Mammary epithelial cell (primary cell): ENCODE measurements at regions of chr14 and their contacts with region 1.

Region 1: DNA sequence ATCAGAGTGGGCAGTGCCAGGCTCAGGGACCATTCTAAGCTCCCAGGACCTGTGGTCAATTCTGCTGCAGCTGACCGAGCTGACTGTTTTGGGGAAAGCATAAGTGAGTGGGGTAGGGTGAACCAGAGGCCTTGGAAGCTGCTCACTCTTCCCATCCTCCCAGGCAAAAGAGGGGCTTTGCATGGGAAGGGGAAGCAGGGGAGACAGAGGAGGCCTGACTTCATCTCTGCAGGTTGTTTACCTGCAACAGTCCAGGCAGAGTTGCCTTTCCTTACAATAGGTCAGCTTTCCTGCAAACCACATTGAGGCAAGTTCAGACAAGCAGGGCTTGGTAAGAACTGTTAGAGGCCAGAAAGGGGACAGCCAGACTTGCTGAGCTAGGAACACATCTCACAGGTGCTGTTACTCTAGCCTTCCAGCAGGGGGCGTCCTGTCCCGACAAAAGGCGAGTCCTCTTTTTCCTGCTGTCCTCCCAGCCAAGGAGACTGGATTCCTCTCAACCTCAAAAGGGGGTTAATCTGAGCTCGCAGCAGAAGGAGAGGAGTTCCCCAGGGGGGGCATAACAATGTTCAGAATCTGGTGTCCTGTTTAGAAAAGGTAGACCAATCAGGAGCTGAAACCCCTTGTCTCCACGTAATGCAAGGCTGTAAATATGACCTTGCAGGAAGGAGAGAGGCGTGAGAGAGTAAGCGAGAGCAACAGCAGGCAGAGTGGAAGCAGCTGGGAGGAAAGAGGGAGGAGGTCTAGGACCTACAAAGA is 4.3 kb upstream of the DHRS2 start:
- DNase-seq: peak; percentile 89
- H3K4me3 ChIP-seq: no peak overlapping the region
- H3K27ac ChIP-seq: no peak overlapping the region
- H3K4me1 ChIP-seq: peaks cover 8% of the 10 kb centered on the region
- H3K27me3 ChIP-seq: no peaks in the 10 kb centered on the region
- CTCF ChIP-seq: peak; percentile 96

Region 2: GRCh38 chr14:23588884-23589598 is 42.8 kb before region 1 on chr14:
- CTCF ChIA-PET with region 1: interaction called, 10 read pairs
- dilution Hi-C with region 1: no loop called
- in situ Hi-C with region 1: no loop called
- intact Hi-C with region 1: no loop called
- DNase-seq: peak; percentile 72
- H3K4me3 ChIP-seq: no peak overlapping the region
- H3K27ac ChIP-seq: no peak overlapping the region
- H3K4me1 ChIP-seq: no peaks in the 10 kb centered on the region
- H3K27me3 ChIP-seq: no peaks in the 10 kb centered on the region
- CTCF ChIP-seq: peak; percentile 68 to 88

Region 3: GRCh38 chr14:23641915-23642588 is 10.2 kb after region 1 on chr14:
- CTCF ChIA-PET with region 1: no interaction called
- dilution Hi-C with region 1: no loop called
- in situ Hi-C with region 1: no loop called
- intact Hi-C with region 1: no loop called
- DNase-seq: no peak
- H3K4me3 ChIP-seq: no peak overlapping the region
- H3K27ac ChIP-seq: no peak overlapping the region
- H3K4me1 ChIP-seq: no peaks in the 10 kb centered on the region
- H3K27me3 ChIP-seq: no peaks in the 10 kb centered on the region
- CTCF ChIP-seq: no peak

Region 4: DNA sequence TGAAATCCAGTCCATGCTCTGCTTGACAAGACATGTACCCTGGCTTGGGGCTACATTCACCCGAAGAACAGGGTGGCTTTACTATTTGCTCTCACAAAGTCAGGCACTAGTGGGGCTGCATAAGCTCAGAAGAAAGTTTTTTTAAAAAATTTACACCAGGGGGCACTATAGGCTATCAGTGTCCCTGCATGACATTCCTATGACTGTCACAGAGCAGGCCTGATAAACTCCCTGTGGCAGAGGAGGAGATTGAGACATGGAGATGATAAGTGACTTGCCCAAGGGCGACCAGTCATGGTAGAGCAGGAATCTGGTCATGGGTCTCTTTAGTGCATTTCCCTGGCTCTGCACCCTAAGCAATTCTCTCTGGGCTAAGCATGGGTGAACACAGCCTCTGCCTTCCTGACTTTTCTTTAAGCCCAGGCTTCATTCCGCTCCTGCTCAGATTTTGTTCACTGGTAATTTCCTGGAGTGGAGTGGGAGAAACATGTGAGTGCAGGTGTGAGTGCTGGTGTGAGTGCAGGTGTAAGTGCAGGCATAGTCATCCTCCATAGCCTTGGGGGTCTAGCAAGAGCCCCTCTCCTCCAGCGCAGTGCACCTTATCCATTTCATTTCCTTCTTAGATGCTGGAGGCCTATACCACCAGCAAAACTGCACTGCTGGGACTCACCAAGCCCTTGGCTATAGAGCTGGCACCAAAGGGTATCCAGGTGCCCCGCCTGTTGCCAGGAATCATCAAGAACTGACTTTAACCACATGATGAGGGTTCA is 95.9 kb after region 1 on chr14:
- CTCF ChIA-PET with region 1: no interaction called
- dilution Hi-C with region 1: no loop called
- in situ Hi-C with region 1: no loop called
- intact Hi-C with region 1: loop called (anchors 1 kb)
- DNase-seq: peak; percentile 43
- H3K4me3 ChIP-seq: no peak overlapping the region
- H3K27ac ChIP-seq: no peak overlapping the region
- H3K4me1 ChIP-seq: peaks cover 8% of the 10 kb centered on the region
- H3K27me3 ChIP-seq: peaks cover 2% of the 10 kb centered on the region
- CTCF ChIP-seq: peak; percentile 37 to 40

Region 5: DNA sequence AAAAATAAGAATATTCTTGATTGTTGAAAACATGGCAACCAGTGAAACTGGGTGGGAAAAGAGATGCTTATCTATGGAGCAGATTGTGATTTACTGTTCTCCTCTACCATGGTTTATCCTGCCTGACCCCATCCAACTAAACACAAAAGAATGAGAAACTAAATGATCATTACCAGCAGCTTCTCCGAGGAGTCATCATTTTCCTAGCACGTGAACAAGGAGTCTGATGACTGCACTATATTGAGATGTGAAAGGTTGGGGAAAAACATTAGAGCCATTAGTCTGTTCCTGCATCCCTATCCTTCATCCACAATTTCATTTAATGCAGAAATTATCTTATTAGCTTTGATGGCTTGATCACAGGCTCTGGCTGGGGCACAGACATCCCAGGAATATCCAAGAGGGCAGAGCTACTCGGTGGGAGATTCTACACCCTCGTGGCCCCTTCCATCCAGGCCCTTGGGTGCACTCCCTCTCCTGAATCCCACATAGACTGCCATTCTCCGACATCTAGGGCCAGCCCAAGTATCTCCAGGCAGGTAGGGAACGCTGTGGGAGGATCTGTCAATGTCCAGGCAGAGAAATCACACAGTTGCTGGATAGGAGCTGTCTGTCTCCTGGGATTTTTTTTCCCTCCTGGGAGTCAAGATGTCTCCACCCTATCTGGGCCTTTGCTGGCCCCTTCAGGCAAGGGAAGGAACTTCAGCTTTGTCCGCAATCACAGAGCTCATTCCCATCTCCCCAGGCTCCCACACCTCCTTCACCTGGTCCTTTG is 278.4 kb after region 1 on chr14:
- CTCF ChIA-PET with region 1: interaction called, 16 read pairs
- dilution Hi-C with region 1: no loop called
- in situ Hi-C with region 1: no loop called
- intact Hi-C with region 1: loop called (anchors 1 kb)
- DNase-seq: peak; percentile 53
- H3K4me3 ChIP-seq: no peak overlapping the region
- H3K27ac ChIP-seq: no peak overlapping the region
- H3K4me1 ChIP-seq: no peaks in the 10 kb centered on the region
- H3K27me3 ChIP-seq: no peaks in the 10 kb centered on the region
- CTCF ChIP-seq: peak; percentile 90 to 92

Region 6: GRCh38 chr14:23929822-23930294 is 298.0 kb after region 1 on chr14:
- CTCF ChIA-PET with region 1: no interaction called
- dilution Hi-C with region 1: no loop called
- in situ Hi-C with region 1: no loop called
- intact Hi-C with region 1: loop called (anchors 2 kb)
- DNase-seq: peak; percentile 39
- H3K4me3 ChIP-seq: no peak overlapping the region
- H3K27ac ChIP-seq: no peak overlapping the region
- H3K4me1 ChIP-seq: peaks cover 3% of the 10 kb centered on the region
- H3K27me3 ChIP-seq: no peaks in the 10 kb centered on the region
- CTCF ChIP-seq: peak; percentile 92 to 93

Region 7: DNA sequence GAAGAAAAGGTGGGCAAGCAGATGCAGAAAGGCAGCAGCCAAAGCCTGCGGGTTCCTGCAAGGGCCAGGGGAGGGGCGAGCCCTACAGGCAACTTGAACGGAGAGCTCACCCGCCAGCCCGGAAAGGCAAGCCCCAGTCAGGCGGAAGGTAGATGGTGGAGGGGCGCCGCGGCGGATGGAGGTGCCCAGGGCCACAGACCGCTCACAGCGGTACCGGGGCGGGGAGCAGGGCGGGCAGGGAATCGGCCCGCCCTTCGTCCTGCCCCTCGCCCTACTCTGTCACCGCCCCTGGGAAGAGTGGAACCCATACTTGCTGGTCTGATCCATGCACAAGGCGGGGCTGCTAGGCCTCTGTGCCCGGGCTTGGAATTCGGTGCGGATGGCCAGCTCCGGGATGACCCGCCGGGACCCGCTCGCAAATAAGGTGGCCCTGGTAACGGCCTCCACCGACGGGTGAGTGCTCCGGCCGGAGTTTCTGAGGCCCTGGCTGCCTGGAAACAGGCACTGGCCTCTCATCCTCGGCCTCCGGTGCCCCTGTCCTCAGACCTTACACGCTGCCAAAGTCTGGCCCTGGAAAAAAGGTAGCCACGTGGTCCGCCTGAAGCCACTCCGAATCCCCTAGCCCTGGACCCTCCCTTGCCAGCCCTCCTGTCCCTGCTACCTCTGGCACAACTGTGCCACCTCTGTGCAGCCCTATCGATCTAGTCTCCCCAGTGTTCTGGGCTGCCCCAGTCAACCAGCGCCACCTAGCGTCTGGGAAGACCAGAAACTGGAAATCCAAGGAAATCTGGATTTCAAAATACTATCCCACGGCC is 321.8 kb after region 1 on chr14 and contains the start of gene DHRS4:
- CTCF ChIA-PET with region 1: no interaction called
- dilution Hi-C with region 1: no loop called
- in situ Hi-C with region 1: no loop called
- intact Hi-C with region 1: loop called (anchors 1 kb)
- DNase-seq: peak; percentile 86
- H3K4me3 ChIP-seq: peak within 1 kb of the TSS; percentile 54 to 82 (median 68)
- H3K27ac ChIP-seq: peak within 1 kb of the TSS; percentile 52
- H3K4me1 ChIP-seq: no peaks in the 10 kb centered on the region
- H3K27me3 ChIP-seq: no peaks in the 10 kb centered on the region
- CTCF ChIP-seq: peak; percentile 75 to 93
- total RNA-seq, gene DHRS4: 25.0 to 30.9 TPM